Caco-2 (cell line): ENCODE measurements at regions of chr15 and their contacts with region 1.

Region 1: GRCh38 chr15:44545913-44546802 is 9.2 kb downstream of the EIF3J start:
- DNase-seq: no peak
- H3K4me3 ChIP-seq: no peak overlapping the region
- H3K4me3 Mint-ChIP-seq: no peak overlapping the region
- H3K27ac Mint-ChIP-seq: no peak overlapping the region
- H3K4me1 ChIP-seq: no peaks in the 10 kb centered on the region
- H3K4me1 Mint-ChIP-seq: no peaks in the 10 kb centered on the region
- H3K27me3 ChIP-seq: no peaks in the 10 kb centered on the region
- H3K27me3 Mint-ChIP-seq: no peaks in the 10 kb centered on the region
- CTCF ChIP-seq: peak; percentile 12 to 13

Region 2: GRCh38 chr15:44394062-44394461 is 152.1 kb before region 1 on chr15:
- CTCF ChIA-PET with region 1: no interaction called
- POLR2A ChIA-PET with region 1: interaction called, 17 read pairs
- intact Hi-C with region 1: no loop called
- DNase-seq: peak; percentile 42 to 62
- H3K4me3 ChIP-seq: no peak overlapping the region
- H3K4me3 Mint-ChIP-seq: no peak overlapping the region
- H3K27ac Mint-ChIP-seq: peak overlapping the region; percentile 61
- H3K4me1 ChIP-seq: peaks cover 23% of the 10 kb centered on the region
- H3K4me1 Mint-ChIP-seq: peaks cover 6% of the 10 kb centered on the region
- H3K27me3 ChIP-seq: no peaks in the 10 kb centered on the region
- H3K27me3 Mint-ChIP-seq: no peaks in the 10 kb centered on the region
- CTCF ChIP-seq: no peak